PC-3 (cell line): ENCODE measurements at regions of chr5 and their contacts with region 1.

Region 1: DNA sequence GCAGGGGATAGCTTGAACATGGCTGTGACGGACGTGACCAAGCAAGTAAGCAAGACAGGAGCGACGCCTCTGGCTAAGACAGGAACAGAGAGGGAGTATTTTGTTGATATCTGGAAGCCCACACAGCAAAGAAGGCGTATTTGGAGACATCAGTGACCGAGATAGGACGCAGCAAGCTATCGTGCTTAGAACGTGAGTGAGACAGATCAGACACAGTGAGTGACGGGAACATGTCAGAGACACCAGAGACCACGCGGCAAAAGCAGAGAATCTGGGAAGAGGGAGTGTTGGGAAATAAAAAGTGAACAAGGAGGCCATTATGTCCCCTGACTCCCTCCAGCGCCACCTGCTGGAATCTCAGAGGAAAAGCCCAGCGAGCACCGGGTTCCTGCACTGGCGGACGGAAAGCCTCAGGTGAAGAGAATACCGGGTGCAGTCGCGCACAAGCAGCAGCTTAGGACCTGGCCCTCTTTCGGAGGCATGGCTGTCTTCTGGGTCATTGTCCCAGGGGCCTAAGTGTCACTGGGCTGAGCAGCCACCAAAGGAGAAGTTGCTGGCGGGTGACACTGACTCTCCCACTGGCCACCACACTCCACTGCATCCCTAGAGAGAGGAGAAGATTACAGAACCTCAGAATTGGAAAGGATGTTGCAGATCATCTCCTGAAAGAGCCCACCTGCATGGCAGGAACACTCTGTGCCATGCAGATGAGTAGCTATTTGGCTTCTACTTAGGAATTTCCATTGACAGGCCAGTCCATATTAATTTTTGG is 99.1 kb downstream of the FBXO38 start:
- DNase-seq: peak; percentile 87
- ATAC-seq: peak; percentile 90
- H3K4me3 ChIP-seq: no peak overlapping the region
- H3K27ac ChIP-seq: no peak overlapping the region
- H3K4me1 ChIP-seq: no peaks in the 10 kb centered on the region
- H3K27me3 ChIP-seq: peaks cover 55% of the 10 kb centered on the region
- CTCF ChIP-seq: peak; percentile 98

Region 2: GRCh38 chr5:148443998-148444397 is 38.9 kb before region 1 on chr5:
- CTCF ChIA-PET with region 1: no interaction called
- POLR2A ChIA-PET with region 1: no interaction called
- intact Hi-C with region 1: loop called (anchors 1 kb)
- DNase-seq: peak; percentile 91
- ATAC-seq: peak; percentile 93
- H3K4me3 ChIP-seq: no peak overlapping the region
- H3K27ac ChIP-seq: no peak overlapping the region
- H3K4me1 ChIP-seq: no peaks in the 10 kb centered on the region
- H3K27me3 ChIP-seq: no peaks in the 10 kb centered on the region
- CTCF ChIP-seq: peak; percentile 97